Activated CD4-positive, alpha-beta T cell treated with anti-CD3 and anti-CD28 coated beads for 36 hours (primary cell): ENCODE measurements at regions of chr14 and their contacts with region 1.

Region 1: GRCh38 chr14:73924337-73924736 is 25.6 kb downstream of the FAM161B start:
- DNase-seq: no peak
- ATAC-seq: no peak
- H3K4me3 Mint-ChIP-seq: no peak overlapping the region
- H3K27ac Mint-ChIP-seq: no peak overlapping the region
- H3K4me1 Mint-ChIP-seq: no peaks in the 10 kb centered on the region
- H3K27me3 Mint-ChIP-seq: no peaks in the 10 kb centered on the region

Region 2: DNA sequence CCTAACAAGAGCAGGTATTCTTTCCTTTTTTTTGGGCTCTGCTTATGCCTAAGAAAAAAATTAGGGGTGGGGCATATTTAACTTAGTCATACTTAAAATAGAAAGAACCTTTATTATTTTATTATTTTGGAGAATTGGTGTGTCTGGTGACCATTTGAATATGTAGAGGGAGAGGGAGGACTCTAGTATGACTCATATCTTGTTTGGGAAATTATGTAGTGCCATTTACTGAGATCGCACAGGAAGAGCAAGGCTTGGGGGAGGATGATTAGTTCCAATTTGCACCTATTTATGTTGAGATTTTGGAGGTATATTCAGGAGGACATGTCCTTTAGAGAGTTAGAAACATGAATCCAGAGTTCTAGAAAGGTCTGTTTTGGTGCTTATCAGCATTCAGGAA is 27.8 kb before region 1 on chr14:
- CTCF ChIA-PET with region 1: no interaction called
- POLR2A ChIA-PET with region 1: no interaction called
- intact Hi-C with region 1: loop called in 1 of 2 experiments (anchors 2 kb)
- DNase-seq: no peak
- ATAC-seq: no peak
- H3K4me3 Mint-ChIP-seq: no peak overlapping the region
- H3K27ac Mint-ChIP-seq: peak overlapping the region; percentile 88
- H3K4me1 Mint-ChIP-seq: peaks cover 15% of the 10 kb centered on the region
- H3K27me3 Mint-ChIP-seq: no peaks in the 10 kb centered on the region

Region 3: GRCh38 chr14:73958591-73958990 is 34.3 kb after region 1 on chr14:
- CTCF ChIA-PET with region 1: no interaction called
- POLR2A ChIA-PET with region 1: no interaction called
- intact Hi-C with region 1: no loop called
- DNase-seq: no peak
- ATAC-seq: no peak
- H3K4me3 Mint-ChIP-seq: no peak overlapping the region
- H3K27ac Mint-ChIP-seq: no peak overlapping the region
- H3K4me1 Mint-ChIP-seq: no peaks in the 10 kb centered on the region
- H3K27me3 Mint-ChIP-seq: no peaks in the 10 kb centered on the region